Naive thymus-derived CD4-positive, alpha-beta T cell (primary cell): ENCODE measurements at regions of chr4 and their contacts with region 1.

Region 1: GRCh38 chr4:99949034-99949998 is 759 bp downstream of the H2AZ1 start:
- DNase-seq: peak; percentile 63 to 90 (median 86)
- ATAC-seq: peak; percentile 49
- H3K4me3 ChIP-seq: peak overlapping the region; percentile 93
- H3K4me3 Mint-ChIP-seq: no peak overlapping the region
- H3K27ac ChIP-seq: peak overlapping the region; percentile 91
- H3K27ac Mint-ChIP-seq: no peak overlapping the region
- H3K4me1 ChIP-seq: peaks cover 34 to 37% of the 10 kb centered on the region in 2 donors
- H3K4me1 Mint-ChIP-seq: peaks cover 18 to 40% (median 31%) of the 10 kb centered on the region in 7 donors
- H3K27me3 ChIP-seq: no peaks in the 10 kb centered on the region
- H3K27me3 Mint-ChIP-seq: no peaks in the 10 kb centered on the region

Region 2: GRCh38 chr4:98143001-98143899 is 1806.1 kb before region 1 on chr4 and contains the start of gene STPG2:
- CTCF ChIA-PET with region 1: no interaction called
- POLR2A ChIA-PET with region 1: no interaction called
- intact Hi-C with region 1: loop called (anchors 1 to 2 kb)
- DNase-seq: peak; percentile 85 to 93 (median 91)
- ATAC-seq: peak; percentile 100
- H3K4me3 ChIP-seq: peak within 1 kb of the TSS; percentile 85
- H3K4me3 Mint-ChIP-seq: peak within 1 kb of the TSS; percentile 87 to 99 (median 94)
- H3K27ac ChIP-seq: peak within 1 kb of the TSS; percentile 84
- H3K27ac Mint-ChIP-seq: peak within 1 kb of the TSS; percentile 96 to 99 (median 98)
- H3K4me1 ChIP-seq: peaks cover 6 to 10% of the 10 kb centered on the region in 2 donors
- H3K4me1 Mint-ChIP-seq: peaks cover 12 to 28% (median 24%) of the 10 kb centered on the region in 7 donors
- H3K27me3 ChIP-seq: no peaks in the 10 kb centered on the region
- H3K27me3 Mint-ChIP-seq: peaks cover 0 to 16% (median 0%) of the 10 kb centered on the region in 5 donors
- total RNA-seq, gene STPG2: 0.19 to 0.47 (median 0.30) TPM in 4 of 5 experiments, not detected in the other

Region 3: GRCh38 chr4:99088481-99089365 is 860.6 kb before region 1 on chr4 and contains the start of gene ADH5:
- CTCF ChIA-PET with region 1: no interaction called
- POLR2A ChIA-PET with region 1: interaction called, 7 read pairs
- intact Hi-C with region 1: loop called (anchors 1 to 5 kb)
- DNase-seq: peak; percentile 75 to 90 (median 85)
- ATAC-seq: peak; percentile 98
- H3K4me3 ChIP-seq: peak within 1 kb of the TSS; percentile 98
- H3K4me3 Mint-ChIP-seq: peak within 1 kb of the TSS; percentile 93 to 99 (median 98)
- H3K27ac ChIP-seq: peak within 1 kb of the TSS; percentile 85
- H3K27ac Mint-ChIP-seq: peak within 1 kb of the TSS; percentile 94 to 99 (median 98)
- H3K4me1 ChIP-seq: peaks cover 8 to 9% of the 10 kb centered on the region in 2 donors
- H3K4me1 Mint-ChIP-seq: peaks cover 28 to 67% (median 57%) of the 10 kb centered on the region in 7 donors
- H3K27me3 ChIP-seq: no peaks in the 10 kb centered on the region
- H3K27me3 Mint-ChIP-seq: peaks cover 0 to 11% (median 0%) of the 10 kb centered on the region in 5 donors
- total RNA-seq, gene ADH5: 42.7 to 102 (median 74.0) TPM

Region 4: DNA sequence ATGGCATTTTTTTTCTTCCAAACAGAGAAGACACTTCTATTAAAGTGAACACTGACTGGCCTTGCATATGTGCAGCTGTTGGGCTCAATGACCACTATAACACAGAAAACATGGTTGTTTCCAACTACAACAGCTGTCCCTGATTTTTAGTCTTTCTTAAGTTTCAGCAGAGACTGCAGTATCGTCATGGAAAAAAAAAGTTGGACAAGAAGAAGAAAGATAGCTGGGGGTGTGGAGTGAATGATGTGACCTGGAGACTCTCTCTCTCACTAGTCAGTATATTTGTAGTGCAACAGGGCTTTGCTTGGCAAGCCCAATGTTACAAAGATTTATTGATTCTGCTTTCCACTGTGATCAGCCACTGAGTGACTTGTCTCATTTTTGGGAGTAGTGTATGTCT is 262.2 kb before region 1 on chr4:
- CTCF ChIA-PET with region 1: no interaction called
- POLR2A ChIA-PET with region 1: no interaction called
- intact Hi-C with region 1: no loop called
- DNase-seq: no peak
- ATAC-seq: no peak
- H3K4me3 ChIP-seq: no peak overlapping the region
- H3K4me3 Mint-ChIP-seq: no peak overlapping the region
- H3K27ac ChIP-seq: no peak overlapping the region
- H3K27ac Mint-ChIP-seq: no peak overlapping the region
- H3K4me1 ChIP-seq: no peaks in the 10 kb centered on the region
- H3K4me1 Mint-ChIP-seq: no peaks in the 10 kb centered on the region
- H3K27me3 ChIP-seq: no peaks in the 10 kb centered on the region
- H3K27me3 Mint-ChIP-seq: peaks cover 2 to 25% (median 9%) of the 10 kb centered on the region in 5 donors

Region 5: DNA sequence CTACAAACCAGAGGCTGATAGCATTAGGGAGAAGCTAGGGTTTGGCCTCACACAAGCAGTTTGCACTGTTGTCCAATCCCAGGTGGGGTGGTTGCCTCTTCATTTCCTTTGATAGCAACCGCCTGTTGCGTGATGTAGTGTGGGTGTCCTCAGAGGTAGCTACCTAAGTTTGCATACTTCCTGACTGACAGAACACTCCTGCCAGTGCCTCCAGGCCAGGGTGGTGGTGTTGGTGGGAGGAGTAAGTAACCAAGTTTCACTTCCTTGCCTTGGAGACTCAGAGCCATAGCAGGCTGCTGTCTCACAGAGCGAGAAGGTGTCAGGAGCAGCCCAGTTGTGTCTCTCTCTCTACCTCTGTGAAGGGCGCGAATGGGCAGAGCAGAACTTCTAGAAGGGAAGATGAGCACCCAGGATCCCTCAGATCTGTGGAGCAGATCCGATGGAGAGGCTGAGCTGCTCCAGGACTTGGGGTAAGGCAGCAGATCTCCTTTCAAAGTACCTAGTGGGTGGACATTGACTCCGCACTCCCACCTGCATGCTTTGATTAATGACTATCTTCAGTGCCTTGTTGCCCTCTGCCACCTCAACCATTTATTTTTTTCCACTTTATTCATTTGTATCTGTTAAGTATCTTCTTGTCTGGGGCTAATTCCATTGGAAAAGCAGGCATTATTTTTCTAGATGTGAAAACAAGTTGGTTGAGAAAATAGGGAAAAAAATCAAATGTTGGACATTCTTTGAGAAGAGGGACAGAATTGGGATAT is 132.6 kb before region 1 on chr4 and contains the start of gene DAPP1:
- CTCF ChIA-PET with region 1: interaction called, 28 read pairs
- POLR2A ChIA-PET with region 1: interaction called, 32 read pairs
- intact Hi-C with region 1: loop called (anchors 1 kb)
- DNase-seq: peak; percentile 44 to 88 (median 84)
- ATAC-seq: peak; percentile 95
- H3K4me3 ChIP-seq: peak within 1 kb of the TSS; percentile 71
- H3K4me3 Mint-ChIP-seq: peak within 1 kb of the TSS; percentile 71 to 95 (median 92)
- H3K27ac ChIP-seq: peak within 1 kb of the TSS; percentile 77
- H3K27ac Mint-ChIP-seq: peak within 1 kb of the TSS; percentile 87 to 98 (median 96)
- H3K4me1 ChIP-seq: peaks cover 16 to 32% of the 10 kb centered on the region in 2 donors
- H3K4me1 Mint-ChIP-seq: peaks cover 41 to 72% (median 63%) of the 10 kb centered on the region in 7 donors
- H3K27me3 ChIP-seq: no peaks in the 10 kb centered on the region
- H3K27me3 Mint-ChIP-seq: no peaks in the 10 kb centered on the region
- total RNA-seq, gene DAPP1: 10.9 to 49.6 (median 20.7) TPM

Region 6: DNA sequence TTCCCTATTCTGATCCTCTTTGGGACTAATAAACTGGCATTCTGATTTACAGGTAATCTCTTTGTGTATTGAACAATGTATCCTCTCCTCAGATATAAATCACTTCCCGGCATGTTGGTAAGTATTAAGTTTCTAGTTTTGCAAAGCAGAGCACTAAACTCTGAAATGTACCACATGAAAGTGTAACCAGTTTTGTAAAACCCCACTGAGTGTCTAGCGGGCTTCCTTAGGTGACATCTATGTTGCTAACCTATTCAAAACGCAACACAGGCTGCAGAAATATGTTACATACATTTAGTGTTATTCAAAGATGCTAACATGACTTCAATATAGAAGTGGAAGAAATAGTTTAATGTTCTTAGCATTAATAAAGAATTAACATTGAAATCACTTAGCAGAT is 28.1 kb before region 1 on chr4:
- CTCF ChIA-PET with region 1: interaction called, 3 read pairs
- POLR2A ChIA-PET with region 1: interaction called, 10 read pairs
- intact Hi-C with region 1: loop called in 1 of 2 experiments (anchors 1 kb)
- DNase-seq: peak in 7 of 9 donors; percentile 8 to 59 (median 34)
- ATAC-seq: peak; percentile 89
- H3K4me3 ChIP-seq: no peak overlapping the region
- H3K4me3 Mint-ChIP-seq: peak overlapping the region; percentile 1 to 67 (median 42)
- H3K27ac ChIP-seq: no peak overlapping the region
- H3K27ac Mint-ChIP-seq: peak overlapping the region; percentile 62 to 88 (median 78)
- H3K4me1 ChIP-seq: peaks cover 0 to 4% of the 10 kb centered on the region in 2 donors
- H3K4me1 Mint-ChIP-seq: peaks cover 13 to 51% (median 22%) of the 10 kb centered on the region in 7 donors
- H3K27me3 ChIP-seq: no peaks in the 10 kb centered on the region
- H3K27me3 Mint-ChIP-seq: no peaks in the 10 kb centered on the region

Region 7: DNA sequence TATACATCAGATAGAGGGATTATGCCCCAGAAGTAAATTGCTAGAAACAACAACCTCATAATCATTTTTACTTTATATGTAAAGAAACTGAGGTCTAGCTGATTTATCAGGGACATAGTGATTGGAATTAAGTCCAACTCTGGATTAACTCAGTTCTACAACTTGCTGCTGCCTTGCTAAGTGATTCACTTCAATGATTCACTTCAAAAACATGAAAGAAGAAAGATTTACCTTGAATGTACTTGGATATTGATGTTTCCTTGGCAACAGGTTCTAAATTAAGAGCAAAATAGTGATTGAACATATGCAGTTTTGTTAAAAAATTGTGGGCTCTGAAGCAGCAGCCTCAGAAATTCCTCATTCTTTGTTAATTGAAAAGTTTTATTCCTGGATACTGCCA is 100.6 kb after region 1 on chr4:
- CTCF ChIA-PET with region 1: no interaction called
- POLR2A ChIA-PET with region 1: no interaction called
- intact Hi-C with region 1: no loop called
- DNase-seq: no peak
- ATAC-seq: no peak
- H3K4me3 ChIP-seq: no peak overlapping the region
- H3K4me3 Mint-ChIP-seq: no peak overlapping the region
- H3K27ac ChIP-seq: no peak overlapping the region
- H3K27ac Mint-ChIP-seq: no peak overlapping the region
- H3K4me1 ChIP-seq: no peaks in the 10 kb centered on the region
- H3K4me1 Mint-ChIP-seq: no peaks in the 10 kb centered on the region
- H3K27me3 ChIP-seq: no peaks in the 10 kb centered on the region
- H3K27me3 Mint-ChIP-seq: peaks cover 2 to 22% (median 17%) of the 10 kb centered on the region in 5 donors

Region 8: GRCh38 chr4:100093091-100093866 is 144.0 kb after region 1 on chr4:
- CTCF ChIA-PET with region 1: interaction called, 6 read pairs
- POLR2A ChIA-PET with region 1: no interaction called
- intact Hi-C with region 1: loop called (anchors 1 kb)
- DNase-seq: peak; percentile 42 to 96 (median 89)
- ATAC-seq: peak; percentile 99
- H3K4me3 ChIP-seq: no peak overlapping the region
- H3K4me3 Mint-ChIP-seq: peak overlapping the region in 4 of 10 donors; percentile 8 to 70 (median 48)
- H3K27ac ChIP-seq: peak overlapping the region; percentile 55
- H3K27ac Mint-ChIP-seq: peak overlapping the region; percentile 77 to 99 (median 95)
- H3K4me1 ChIP-seq: peaks cover 0 to 16% of the 10 kb centered on the region in 2 donors
- H3K4me1 Mint-ChIP-seq: peaks cover 9 to 48% (median 20%) of the 10 kb centered on the region in 7 donors
- H3K27me3 ChIP-seq: no peaks in the 10 kb centered on the region
- H3K27me3 Mint-ChIP-seq: no peaks in the 10 kb centered on the region

Region 9: DNA sequence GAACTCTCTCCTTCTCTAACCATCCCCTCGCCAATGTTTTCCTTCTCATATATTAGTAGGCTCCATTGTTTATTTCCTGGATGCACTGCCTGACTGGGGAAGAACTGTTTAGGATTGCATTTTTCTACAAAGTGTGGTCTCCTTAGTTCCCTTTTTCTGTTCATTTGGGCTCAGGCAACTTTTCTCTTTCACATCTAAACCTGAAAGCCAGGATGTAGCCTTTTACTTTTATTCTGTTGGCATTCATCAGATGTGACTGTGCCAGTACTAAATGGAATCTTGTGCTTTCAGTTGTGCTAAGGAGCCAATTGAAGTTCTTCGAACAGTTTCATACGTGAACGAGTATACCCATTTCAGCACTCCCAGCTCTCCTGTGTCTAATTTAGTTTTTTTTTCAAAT is 181.2 kb after region 1 on chr4:
- CTCF ChIA-PET with region 1: no interaction called
- POLR2A ChIA-PET with region 1: no interaction called
- intact Hi-C with region 1: no loop called
- DNase-seq: no peak
- ATAC-seq: no peak
- H3K4me3 ChIP-seq: no peak overlapping the region
- H3K4me3 Mint-ChIP-seq: no peak overlapping the region
- H3K27ac ChIP-seq: no peak overlapping the region
- H3K27ac Mint-ChIP-seq: no peak overlapping the region
- H3K4me1 ChIP-seq: no peaks in the 10 kb centered on the region
- H3K4me1 Mint-ChIP-seq: peaks cover 0 to 1% (median 0%) of the 10 kb centered on the region in 7 donors
- H3K27me3 ChIP-seq: no peaks in the 10 kb centered on the region
- H3K27me3 Mint-ChIP-seq: peaks cover 0 to 19% (median 5%) of the 10 kb centered on the region in 5 donors

Region 10: GRCh38 chr4:100194068-100194467 is 244.8 kb after region 1 on chr4:
- CTCF ChIA-PET with region 1: no interaction called
- POLR2A ChIA-PET with region 1: no interaction called
- intact Hi-C with region 1: no loop called
- DNase-seq: no peak
- ATAC-seq: no peak
- H3K4me3 ChIP-seq: no peak overlapping the region
- H3K4me3 Mint-ChIP-seq: no peak overlapping the region
- H3K27ac ChIP-seq: no peak overlapping the region
- H3K27ac Mint-ChIP-seq: no peak overlapping the region
- H3K4me1 ChIP-seq: no peaks in the 10 kb centered on the region
- H3K4me1 Mint-ChIP-seq: peaks cover 14 to 19% (median 15%) of the 10 kb centered on the region in 7 donors
- H3K27me3 ChIP-seq: peaks cover 0 to 7% of the 10 kb centered on the region in 2 donors
- H3K27me3 Mint-ChIP-seq: peaks cover 29 to 42% (median 33%) of the 10 kb centered on the region in 5 donors